ENCODE measurements at regions of chr16 and their contacts with region 1.

Region 1: DNA sequence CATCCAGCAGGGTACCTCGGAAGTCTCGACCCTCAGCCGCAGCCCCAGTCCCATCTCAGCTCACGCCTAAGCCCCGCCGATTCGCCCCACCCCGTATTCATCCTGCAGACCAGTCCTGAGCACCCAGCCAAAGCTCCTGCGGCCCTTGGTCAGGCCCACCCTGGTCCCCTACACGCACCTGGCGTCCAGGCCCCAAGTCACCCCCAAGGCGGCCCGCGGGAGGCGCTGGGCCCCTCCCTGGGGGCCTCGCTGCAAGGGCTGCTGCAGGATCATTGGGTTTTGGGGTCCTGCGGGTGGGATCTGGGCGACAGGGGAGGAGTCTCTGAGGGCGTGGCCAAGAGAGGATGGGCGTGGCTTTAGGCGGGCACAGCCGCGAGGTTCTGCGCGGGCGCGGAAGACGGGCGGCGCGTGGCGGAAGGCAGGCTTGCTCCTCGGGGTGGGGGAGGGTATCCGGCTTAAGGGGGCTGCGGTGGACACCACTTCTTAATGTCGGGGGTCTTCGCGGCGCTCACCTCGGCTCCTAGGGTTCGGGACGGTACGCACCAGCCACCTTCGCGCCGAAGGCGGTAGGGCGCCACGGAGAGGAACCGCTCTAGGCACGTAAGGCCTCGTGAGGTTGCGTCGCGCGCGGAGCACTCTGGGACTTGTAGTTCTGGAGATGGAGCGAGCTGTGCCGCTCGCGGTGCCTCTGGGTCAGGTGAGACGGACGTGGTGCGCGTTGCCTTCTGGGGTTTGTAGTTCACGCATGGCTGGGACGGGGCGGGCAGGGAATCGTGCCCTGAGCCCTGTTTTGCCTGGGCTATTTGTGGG is at the starts of genes HCFC1R1 and THOC6:
- DNase-seq: peak; percentile 88 to 97 (median 94)
- ATAC-seq: peak; percentile 75 to 87
- H3K4me3 Mint-ChIP-seq: peak within 1 kb of the TSS; percentile 76 to 97 (median 92)
- H3K27ac Mint-ChIP-seq: peak within 1 kb of the TSS; percentile 81 to 99 (median 97)
- H3K4me1 Mint-ChIP-seq: peaks cover 25 to 63% (median 61%) of the 10 kb centered on the region in 4 donors
- H3K27me3 Mint-ChIP-seq: peaks cover 0 to 5% (median 2%) of the 10 kb centered on the region in 5 donors
- polyA plus RNA-seq, gene HCFC1R1: 13.1 to 16.5 (median 16.5) TPM
- polyA plus RNA-seq, gene THOC6: 45.2 to 59.0 (median 58.8) TPM

Region 2: DNA sequence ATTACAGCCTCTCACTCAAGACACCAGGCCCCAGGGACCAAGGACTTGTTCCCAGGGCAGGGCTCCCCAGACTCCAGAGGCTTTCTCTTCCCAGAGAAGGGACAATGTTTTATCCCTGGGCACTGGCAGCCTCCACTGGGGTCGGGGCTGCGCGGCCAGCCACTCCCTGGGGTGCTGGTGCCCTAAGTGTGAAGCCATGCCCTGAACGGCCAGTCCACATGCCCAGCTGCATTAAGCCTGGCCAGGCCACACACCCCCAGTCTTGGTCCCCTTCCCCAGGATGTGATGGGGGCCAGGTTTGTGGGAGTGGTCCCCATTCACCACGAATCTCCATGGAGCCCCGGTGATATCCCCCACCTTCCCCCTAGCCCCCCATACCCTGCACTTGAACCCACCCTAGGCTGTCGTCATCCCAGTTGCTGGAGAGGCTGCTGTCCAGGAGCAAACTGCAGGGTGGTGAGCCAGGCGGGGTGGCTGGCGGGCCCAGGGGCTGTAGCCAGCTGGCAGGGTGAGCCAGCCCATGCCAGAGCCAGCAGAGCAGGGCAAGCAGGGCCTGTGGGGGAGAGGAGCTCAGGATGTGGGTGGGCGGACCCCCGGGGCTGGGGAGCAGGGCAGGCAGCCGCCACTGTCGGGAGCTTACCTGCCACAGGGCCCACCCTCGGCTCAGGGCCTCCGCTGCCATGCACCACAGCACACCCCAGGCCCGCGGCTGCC is 50.1 kb before region 1 on chr16:
- POLR2A ChIA-PET with region 1: no interaction called
- DNase-seq: no peak
- ATAC-seq: no peak
- H3K4me3 Mint-ChIP-seq: no peak overlapping the region
- H3K27ac Mint-ChIP-seq: no peak overlapping the region
- H3K4me1 Mint-ChIP-seq: peaks cover under 1 to 8% (median 6%) of the 10 kb centered on the region in 4 donors
- H3K27me3 Mint-ChIP-seq: peaks cover 0 to 28% (median 14%) of the 10 kb centered on the region in 5 donors

Region 3: DNA sequence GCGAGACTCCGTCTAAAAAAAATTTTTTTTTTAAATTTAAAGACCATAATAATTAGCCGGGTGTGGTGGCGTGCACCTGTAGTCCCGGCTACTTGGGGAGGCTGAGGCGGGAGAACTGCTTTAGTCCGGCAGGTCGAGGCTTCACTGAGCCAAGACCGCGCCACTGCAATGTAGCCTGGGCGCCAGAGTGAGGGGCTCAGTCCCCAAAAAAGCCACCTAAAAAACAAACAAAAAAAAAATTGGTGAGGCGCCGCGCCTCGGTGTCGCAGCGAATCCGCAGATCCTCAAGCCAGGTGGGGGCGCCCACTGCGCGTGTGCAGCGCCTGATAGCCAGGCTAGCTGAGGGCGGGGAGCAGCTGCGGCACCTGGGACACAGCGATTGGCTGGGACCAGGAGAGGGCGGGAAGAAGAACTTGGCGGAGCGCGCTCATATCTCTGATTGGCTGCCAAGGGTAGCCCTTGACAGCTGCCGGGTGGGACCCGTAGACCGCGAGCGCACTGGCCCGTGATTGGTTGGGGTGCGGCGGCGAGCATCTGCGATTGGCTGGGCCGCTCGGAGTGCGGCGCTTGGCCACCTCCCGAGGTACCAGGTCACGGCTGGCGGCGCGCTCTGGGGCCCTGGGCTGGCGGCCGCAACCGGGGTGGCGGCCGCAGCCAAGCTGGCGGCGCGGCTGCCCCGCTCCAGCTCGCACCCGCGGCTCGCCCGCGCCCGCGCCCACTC is 20.1 kb before region 1 on chr16:
- POLR2A ChIA-PET with region 1: interaction called, 170 read pairs
- DNase-seq: peak; percentile 85 to 98 (median 96)
- ATAC-seq: peak; percentile 98 to 99
- H3K4me3 Mint-ChIP-seq: peak overlapping the region; percentile 68 to 88 (median 80)
- H3K27ac Mint-ChIP-seq: peak overlapping the region in 2 of 10 donors; percentile 34 to 88
- H3K4me1 Mint-ChIP-seq: peaks cover 16 to 31% (median 28%) of the 10 kb centered on the region in 4 donors
- H3K27me3 Mint-ChIP-seq: peaks cover 0 to 17% (median 1%) of the 10 kb centered on the region in 5 donors

Region 4: DNA sequence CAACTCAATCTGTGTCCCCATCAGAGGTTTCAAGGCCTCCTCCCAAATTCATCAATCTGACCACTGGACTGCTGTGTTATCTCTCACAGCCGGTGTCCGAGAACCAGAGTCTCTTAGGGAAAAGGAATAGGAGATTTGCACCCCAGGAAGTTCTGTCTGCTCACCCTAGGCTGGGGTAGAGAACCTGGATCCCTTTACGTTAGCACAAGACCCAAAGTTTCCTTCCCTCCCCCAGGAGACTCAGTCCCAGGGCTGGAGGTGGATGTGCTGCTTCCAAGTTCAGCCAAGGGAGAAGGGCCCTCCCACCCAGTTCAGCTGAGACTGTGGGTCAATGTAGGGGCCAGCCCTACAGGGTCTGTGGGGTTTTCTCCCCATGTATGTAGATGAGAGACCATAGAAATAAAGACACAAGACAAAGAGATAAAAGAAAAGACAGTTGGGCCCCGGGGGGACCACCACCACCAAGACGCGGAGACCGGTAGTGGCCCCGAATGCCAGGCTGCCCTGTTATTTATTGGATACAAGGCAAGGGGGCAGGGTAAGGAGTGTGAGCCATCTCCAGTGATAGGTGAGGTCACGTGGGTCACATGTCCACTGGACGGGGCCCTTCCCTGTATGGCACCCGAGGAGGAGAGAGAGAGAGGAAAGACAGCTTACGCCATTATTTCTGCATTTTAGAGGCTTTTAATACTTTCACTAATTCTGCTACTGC is 141.4 kb after region 1 on chr16:
- POLR2A ChIA-PET with region 1: no interaction called
- DNase-seq: peak in 1 of 10 donors; percentile 54
- ATAC-seq: no peak
- H3K4me3 Mint-ChIP-seq: peak overlapping the region; percentile 7 to 76 (median 61)
- H3K27ac Mint-ChIP-seq: peak overlapping the region; percentile 29 to 90 (median 77)
- H3K4me1 Mint-ChIP-seq: peaks cover 7 to 14% (median 10%) of the 10 kb centered on the region in 4 donors
- H3K27me3 Mint-ChIP-seq: peaks cover 0 to 2% (median 0%) of the 10 kb centered on the region in 5 donors